ENCODE measurements at regions of chr12 and their contacts with region 1.

Region 1: DNA sequence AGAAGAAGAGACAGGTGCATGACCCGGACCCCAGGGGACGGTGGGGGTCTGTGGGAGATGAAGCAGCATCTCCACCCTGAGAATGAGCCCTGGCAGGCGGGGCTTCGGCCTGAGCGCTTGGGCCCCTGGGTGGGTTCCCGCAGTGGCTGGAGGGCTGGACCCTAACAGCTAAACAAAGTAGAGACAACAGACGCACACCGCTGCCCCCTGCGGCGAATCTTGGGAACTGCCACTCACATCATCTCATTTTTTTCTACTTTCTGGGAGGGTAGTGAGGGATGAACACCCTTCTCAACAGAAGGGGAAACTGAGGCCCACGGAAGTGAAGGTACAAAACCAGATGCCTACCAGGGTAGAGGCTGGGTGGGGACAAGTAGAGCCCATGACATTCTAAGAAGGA is 104.7 kb downstream of the RFLNA start:
- DNase-seq: peak; percentile 82
- H3K4me3 ChIP-seq: no peak overlapping the region
- H3K27ac ChIP-seq: no peak overlapping the region; a peak in 1 of 4 replicates
- H3K4me1 ChIP-seq: peaks cover 10 to 60% of the 10 kb centered on the region in 2 experiments; a peak in 3 of 4 replicates
- H3K27me3 ChIP-seq: no peaks in the 10 kb centered on the region
- CTCF ChIP-seq: peak; percentile 72
- EP300 ChIP-seq: no peak
- RAD21 ChIP-seq: peak; percentile 60

Region 2: DNA sequence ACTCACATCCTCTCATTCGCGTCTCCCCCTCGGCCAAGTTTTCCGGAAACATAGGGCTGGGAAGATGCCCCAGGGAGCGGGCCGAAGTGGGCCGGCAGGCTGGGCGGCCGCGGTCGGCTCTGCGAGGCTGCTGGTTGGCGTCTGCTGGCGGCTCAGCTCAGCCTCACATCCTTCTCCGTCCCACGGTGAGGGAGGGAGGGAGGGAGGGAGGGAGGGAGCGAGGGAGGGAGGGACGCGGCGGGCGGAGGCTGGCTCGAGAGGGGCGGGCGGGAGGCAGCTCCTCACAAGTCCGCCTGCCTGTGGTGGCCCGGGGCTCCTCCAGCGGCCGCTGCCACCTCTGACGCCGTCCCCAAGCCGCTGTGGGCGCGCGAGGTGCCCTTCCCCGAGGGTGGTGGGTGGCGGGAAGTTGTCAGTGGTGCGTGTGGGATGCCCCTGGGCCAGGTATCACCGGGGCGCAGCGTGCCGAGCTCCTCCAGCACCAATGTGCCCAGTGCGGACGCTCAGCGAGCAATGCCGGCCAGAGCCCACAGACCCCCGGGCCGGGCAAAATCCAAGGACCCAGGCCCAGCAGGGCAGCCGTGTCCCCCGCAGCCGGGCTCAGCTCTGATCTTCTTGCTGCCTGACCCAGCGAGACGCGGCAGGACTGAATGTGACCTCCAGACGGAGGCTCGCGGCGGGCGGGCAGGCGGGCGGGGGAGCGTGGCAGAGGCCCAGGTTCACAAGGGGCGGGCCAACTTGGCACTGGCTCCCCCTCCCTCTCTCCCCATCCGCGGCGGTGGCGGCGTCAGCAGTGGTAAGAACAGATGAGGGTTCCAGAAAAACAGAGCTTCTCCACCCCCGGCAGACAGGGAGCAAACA is 10.7 kb before region 1 on chr12:
- CTCF ChIA-PET with region 1: interaction called, 20 read pairs
- POLR2A ChIA-PET with region 1: interaction called, 3 read pairs
- DNase-seq: peak; percentile 93
- H3K4me3 ChIP-seq: peak overlapping the region; percentile 61 to 91
- H3K27ac ChIP-seq: peak overlapping the region; percentile 95 to 97
- H3K4me1 ChIP-seq: peaks cover 63 to 64% of the 10 kb centered on the region in 2 experiments
- H3K27me3 ChIP-seq: no peaks in the 10 kb centered on the region
- CTCF ChIP-seq: 0 out of 2 replicates have a peak, but pooled peaks have one; percentile 9
- EP300 ChIP-seq: no peak
- RAD21 ChIP-seq: peak; percentile 9; the same call in 1 of the 2 replicates

Region 3: DNA sequence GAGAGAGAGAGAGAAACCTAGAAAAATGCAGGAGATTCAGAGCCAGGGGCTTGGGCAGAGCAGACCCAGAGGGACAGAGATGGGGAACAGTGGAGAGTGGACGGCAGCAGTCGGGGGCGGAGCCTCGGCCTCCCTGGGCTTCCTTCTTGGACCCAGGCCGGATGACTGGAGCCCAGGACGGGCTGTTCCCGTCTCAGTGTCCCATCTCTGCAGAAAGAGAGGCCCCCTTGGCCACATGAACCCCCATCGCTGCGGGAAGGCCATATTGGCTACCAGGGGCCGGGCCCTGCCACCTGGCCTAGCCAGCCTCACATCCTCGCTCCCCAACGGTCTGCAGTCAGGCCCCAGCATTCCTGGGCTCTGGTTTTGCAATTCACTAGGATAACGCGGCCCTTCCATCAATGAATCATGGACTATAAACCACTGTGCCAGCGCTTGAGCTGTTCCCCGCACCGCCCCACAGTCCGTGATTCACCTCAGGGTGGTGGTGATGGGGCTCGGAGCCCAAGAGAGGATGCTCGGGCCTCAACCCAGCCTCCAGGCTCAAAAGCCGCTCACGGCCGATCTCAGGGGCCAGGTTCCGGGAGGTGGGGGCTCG is 11.8 kb after region 1 on chr12:
- CTCF ChIA-PET with region 1: interaction called, 37 read pairs
- POLR2A ChIA-PET with region 1: no interaction called
- DNase-seq: peak; percentile 69
- H3K4me3 ChIP-seq: no peak overlapping the region
- H3K27ac ChIP-seq: peak overlapping the region; percentile 81 to 93
- H3K4me1 ChIP-seq: peaks cover 22 to 78% of the 10 kb centered on the region in 2 experiments; a peak in 3 of 4 replicates
- H3K27me3 ChIP-seq: no peaks in the 10 kb centered on the region
- CTCF ChIP-seq: no peak
- EP300 ChIP-seq: peak in 1 of 2 experiments; percentile 59; a peak in 1 of 4 replicates
- RAD21 ChIP-seq: no peak

Region 4: GRCh38 chr12:124422570-124423523 is 23.2 kb after region 1 on chr12:
- CTCF ChIA-PET with region 1: interaction called, 36 read pairs
- POLR2A ChIA-PET with region 1: no interaction called
- DNase-seq: peak; percentile 97
- H3K4me3 ChIP-seq: peak overlapping the region; percentile 18 to 45; a peak in 3 of 4 replicates
- H3K27ac ChIP-seq: peak overlapping the region; percentile 99
- H3K4me1 ChIP-seq: peaks cover 17 to 69% of the 10 kb centered on the region in 2 experiments
- H3K27me3 ChIP-seq: no peaks in the 10 kb centered on the region
- CTCF ChIP-seq: no peak
- EP300 ChIP-seq: peak; percentile 17 to 68; a peak in 3 of 4 replicates
- RAD21 ChIP-seq: peak; percentile 47

Region 5: DNA sequence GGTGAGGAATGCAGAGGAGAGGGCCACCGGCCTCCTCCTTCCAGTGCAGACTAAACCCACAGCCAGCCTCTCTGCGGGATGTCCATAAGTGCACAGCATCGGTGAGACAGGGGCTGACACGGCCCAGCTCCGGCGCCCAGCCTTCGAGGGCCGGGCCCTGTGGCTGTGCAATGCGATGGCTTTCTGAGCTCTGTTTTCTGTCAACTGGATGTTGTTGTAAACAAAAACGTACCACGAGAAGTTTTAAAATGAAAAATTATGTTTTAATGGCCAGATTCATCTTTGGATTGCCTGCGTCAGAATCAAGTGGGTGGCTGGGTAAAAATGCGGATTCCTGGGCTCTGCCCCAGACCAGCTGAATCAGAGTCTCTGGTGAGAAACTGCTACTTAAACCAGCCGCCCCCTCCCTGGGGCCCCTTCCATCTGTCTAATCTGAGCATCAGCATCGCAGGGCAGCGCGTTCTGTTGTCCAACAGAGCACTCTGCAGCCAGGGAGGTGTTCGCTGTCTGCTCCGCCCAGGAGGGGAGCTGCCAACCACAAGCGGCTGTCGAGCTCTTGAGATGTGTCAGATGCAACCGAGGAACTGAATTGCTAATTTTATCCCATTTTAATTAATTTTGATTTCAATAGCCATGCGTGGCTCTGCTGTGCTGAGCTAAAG is 28.6 kb after region 1 on chr12:
- CTCF ChIA-PET with region 1: interaction called, 36 read pairs
- POLR2A ChIA-PET with region 1: no interaction called
- DNase-seq: peak; percentile 91
- H3K4me3 ChIP-seq: no peak overlapping the region
- H3K27ac ChIP-seq: peak overlapping the region; percentile 23 to 95; a peak in 2 of 4 replicates
- H3K4me1 ChIP-seq: peaks cover 18 to 88% of the 10 kb centered on the region in 2 experiments; a peak in 3 of 4 replicates
- H3K27me3 ChIP-seq: no peaks in the 10 kb centered on the region
- CTCF ChIP-seq: no peak
- EP300 ChIP-seq: peak in 1 of 2 experiments; percentile 80; a peak in 2 of 4 replicates
- RAD21 ChIP-seq: peak; percentile 52